Left lung (tissue), 14 donors: ENCODE measurements at regions of chr4 and their contacts with region 1.

Region 1: DNA sequence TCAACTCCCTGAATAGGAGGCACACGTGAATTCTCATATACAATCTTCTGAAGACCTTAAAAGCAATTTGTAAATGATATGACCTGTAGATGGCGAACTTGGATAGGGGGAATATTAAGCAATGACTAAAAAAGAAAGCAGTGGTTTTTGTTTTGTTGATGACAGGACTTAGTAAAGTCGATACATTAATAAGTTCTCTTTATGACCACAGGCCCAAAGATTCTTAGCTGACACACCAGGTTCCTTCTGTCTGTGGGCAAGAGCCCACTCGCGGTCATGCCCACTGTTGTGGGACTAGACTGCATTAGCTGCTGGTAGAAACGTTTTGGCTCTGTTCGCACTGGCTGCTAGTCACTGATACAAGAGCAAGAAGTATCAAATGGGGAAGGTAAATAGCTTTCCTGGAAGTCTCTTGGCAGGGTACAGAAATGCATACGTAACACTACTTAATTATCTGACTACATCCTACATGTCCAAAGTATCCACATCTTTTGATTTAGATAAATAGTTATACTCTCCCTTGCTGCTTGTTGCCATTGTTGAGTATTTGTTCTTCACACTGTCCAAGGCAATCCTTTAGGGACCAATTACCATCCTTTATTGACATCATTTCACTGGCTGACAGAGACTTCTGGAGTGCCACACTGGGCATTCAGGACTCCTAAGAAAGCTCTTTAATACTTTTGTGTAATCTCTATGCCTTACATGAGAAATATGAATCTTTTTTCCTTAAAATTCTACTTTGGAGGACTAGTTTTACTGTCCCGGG is 31.0 kb downstream of the ALPK1 start:
- DNase-seq: peak in 2 of 4 donors; percentile 35 to 67
- ATAC-seq: peak; percentile 64
- H3K4me3 ChIP-seq: no peak overlapping the region
- H3K27ac ChIP-seq: no peak overlapping the region
- H3K4me1 ChIP-seq: no peaks in the 10 kb centered on the region
- H3K27me3 ChIP-seq: no peaks in the 10 kb centered on the region
- CTCF ChIP-seq: peak in 1 of 2 donors; percentile 29

Region 2: GRCh38 chr4:112523764-112524505 is 195.8 kb after region 1 on chr4:
- intact Hi-C with region 1: loop called in 1 of 2 experiments (anchors 10 kb)
- DNase-seq: peak in 3 of 4 donors; percentile 70 to 93 (median 70)
- ATAC-seq: peak; percentile 95
- H3K4me3 ChIP-seq: peak overlapping the region; percentile 16 to 32
- H3K27ac ChIP-seq: no peak overlapping the region
- H3K4me1 ChIP-seq: peaks cover 11 to 19% of the 10 kb centered on the region in 2 donors
- H3K27me3 ChIP-seq: peaks cover 61 to 86% of the 10 kb centered on the region in 2 donors
- CTCF ChIP-seq: peak; percentile 67 to 75

Region 3: GRCh38 chr4:112604589-112604988 is 276.4 kb after region 1 on chr4:
- intact Hi-C with region 1: loop called in 1 of 2 experiments (anchors 10 kb)
- DNase-seq: peak in 2 of 4 donors; percentile 25 to 60
- ATAC-seq: peak; percentile 87
- H3K4me3 ChIP-seq: no peak overlapping the region
- H3K27ac ChIP-seq: no peak overlapping the region
- H3K4me1 ChIP-seq: no peaks in the 10 kb centered on the region
- H3K27me3 ChIP-seq: no peaks in the 10 kb centered on the region
- CTCF ChIP-seq: peak; percentile 38 to 66

Region 4: GRCh38 chr4:113328514-113328913 is 1000.4 kb after region 1 on chr4:
- intact Hi-C with region 1: no loop called
- DNase-seq: no peak
- ATAC-seq: peak; percentile 25
- H3K4me3 ChIP-seq: no peak overlapping the region
- H3K27ac ChIP-seq: no peak overlapping the region
- H3K4me1 ChIP-seq: no peaks in the 10 kb centered on the region
- H3K27me3 ChIP-seq: no peaks in the 10 kb centered on the region
- CTCF ChIP-seq: no peak